GM23248 (cell line): ENCODE measurements at regions of chr9 and their contacts with region 1.

Region 1: GRCh38 chr9:93962561-93963440 is 7.6 kb upstream of the BARX1 start:
- DNase-seq: peak; percentile 95
- H3K4me3 ChIP-seq: no peak overlapping the region
- H3K27ac ChIP-seq: no peak overlapping the region
- H3K4me1 ChIP-seq: peaks cover 6% of the 10 kb centered on the region; the same call in 1 of the 2 replicates
- H3K27me3 ChIP-seq: peaks cover 32% of the 10 kb centered on the region

Region 2: GRCh38 chr9:93682232-93682968 is 280.4 kb before region 1 on chr9:
- in situ Hi-C with region 1: loop called (anchors 10 kb)
- DNase-seq: peak; percentile 71
- H3K4me3 ChIP-seq: no peak overlapping the region
- H3K27ac ChIP-seq: no peak overlapping the region
- H3K4me1 ChIP-seq: no peaks in the 10 kb centered on the region
- H3K27me3 ChIP-seq: no peaks in the 10 kb centered on the region

Region 3: GRCh38 chr9:93771276-93771675 is 191.5 kb before region 1 on chr9:
- in situ Hi-C with region 1: no loop called
- DNase-seq: no peak
- H3K4me3 ChIP-seq: no peak overlapping the region
- H3K27ac ChIP-seq: no peak overlapping the region
- H3K4me1 ChIP-seq: no peaks in the 10 kb centered on the region
- H3K27me3 ChIP-seq: no peaks in the 10 kb centered on the region

Region 4: GRCh38 chr9:93807166-93808074 is 155.4 kb before region 1 on chr9:
- in situ Hi-C with region 1: no loop called
- DNase-seq: no peak
- H3K4me3 ChIP-seq: no peak overlapping the region
- H3K27ac ChIP-seq: no peak overlapping the region
- H3K4me1 ChIP-seq: no peaks in the 10 kb centered on the region
- H3K27me3 ChIP-seq: no peaks in the 10 kb centered on the region

Region 5: GRCh38 chr9:94030318-94031179 is 67.7 kb after region 1 on chr9:
- in situ Hi-C with region 1: no loop called
- DNase-seq: peak; percentile 97
- H3K4me3 ChIP-seq: peak overlapping the region; percentile 92
- H3K27ac ChIP-seq: peak overlapping the region; percentile 45
- H3K4me1 ChIP-seq: peaks cover 15% of the 10 kb centered on the region
- H3K27me3 ChIP-seq: no peaks in the 10 kb centered on the region